ENCODE measurements at regions of chr4 and their contacts with region 1.

Region 1: GRCh38 chr4:139603576-139604387 is 47.8 kb upstream of the SETD7 start:
- DNase-seq: no peak

Region 2: DNA sequence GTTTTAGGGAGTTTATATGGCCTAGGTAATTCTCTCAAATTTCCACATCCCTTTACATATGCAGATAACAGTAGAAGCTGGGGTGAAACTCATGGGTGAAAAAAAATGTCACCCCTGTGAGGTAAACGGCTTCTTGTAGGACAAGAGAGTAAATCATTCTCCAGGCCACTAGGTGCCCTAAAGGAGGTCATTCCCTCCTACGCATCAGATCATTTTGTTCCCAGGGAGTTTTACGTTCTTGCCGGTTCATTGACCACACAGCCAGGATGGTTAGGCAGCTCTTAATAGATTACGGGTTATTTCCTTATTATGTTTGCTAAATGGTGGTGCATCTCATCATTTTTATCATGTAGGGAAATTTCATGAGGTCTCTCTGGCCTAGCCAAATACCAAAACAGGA is 814.0 kb before region 1 on chr4:
- intact Hi-C with region 1: no loop called
- DNase-seq: no peak

Region 3: DNA sequence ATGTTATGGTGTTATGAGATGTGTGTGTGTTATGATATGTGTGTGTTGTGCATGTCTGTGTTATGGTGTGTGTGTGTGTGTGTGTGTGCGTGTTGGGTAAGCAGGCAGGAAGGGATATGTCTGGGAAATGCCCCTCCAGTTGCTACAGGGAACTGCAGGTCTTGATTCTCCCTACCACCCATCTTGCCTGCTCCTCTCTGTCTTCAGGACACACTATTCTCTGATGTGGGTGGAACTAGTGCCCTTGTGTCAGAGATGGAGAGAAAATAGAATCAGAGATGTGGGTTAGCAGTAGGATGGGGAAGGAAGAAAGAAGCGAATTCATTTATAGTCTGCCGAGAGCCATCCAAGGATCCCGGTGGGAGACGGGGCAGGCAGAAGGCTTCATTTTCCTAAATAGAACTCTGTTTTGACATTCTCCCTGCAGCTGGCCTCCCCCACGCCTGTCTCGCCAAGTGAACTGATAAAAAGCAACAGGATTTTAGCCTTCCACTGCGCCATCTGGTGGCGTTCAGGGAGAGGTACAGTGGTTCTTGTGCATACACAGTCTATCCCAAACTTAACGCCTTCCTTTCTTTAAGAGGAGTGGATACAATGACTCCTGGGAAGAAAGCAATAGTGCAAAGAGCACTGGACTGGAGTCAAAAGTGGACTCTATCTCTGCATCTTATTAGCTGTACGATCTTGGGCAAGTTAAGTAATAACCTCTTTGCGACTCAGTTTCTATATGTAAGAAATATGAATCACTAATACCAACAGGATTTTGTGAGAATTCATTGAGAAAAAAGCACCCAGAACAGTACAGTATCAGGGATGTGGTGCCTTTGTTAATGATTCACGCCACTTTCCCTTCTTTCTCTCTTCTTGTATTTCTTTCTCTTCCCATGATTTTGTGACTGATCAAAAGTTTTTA is 47.8 kb after region 1 on chr4:
- intact Hi-C with region 1: loop called (anchors 5 to 10 kb)
- DNase-seq: peak; percentile 95

Region 4: GRCh38 chr4:141180991-141181761 is 1577.4 kb after region 1 on chr4:
- intact Hi-C with region 1: no loop called
- DNase-seq: no peak